PC-3 (cell line): ENCODE measurements at regions of chr20 and their contacts with region 1.

Region 1: GRCh38 chr20:9068851-9069663 is at the start of gene PLCB4:
- DNase-seq: peak; percentile 89
- ATAC-seq: peak; percentile 53
- H3K4me3 ChIP-seq: peak within 1 kb of the TSS; percentile 91
- H3K27ac ChIP-seq: peak within 1 kb of the TSS; percentile 42
- H3K4me1 ChIP-seq: peaks cover 43% of the 10 kb centered on the region
- H3K27me3 ChIP-seq: no peaks in the 10 kb centered on the region
- CTCF ChIP-seq: no peak
- total RNA-seq, gene PLCB4: 16.9 and 25.4 TPM in 2 replicates

Region 2: GRCh38 chr20:8798505-8798904 is 270.6 kb before region 1 on chr20:
- CTCF ChIA-PET with region 1: no interaction called
- POLR2A ChIA-PET with region 1: no interaction called
- intact Hi-C with region 1: no loop called
- DNase-seq: no peak
- ATAC-seq: no peak
- H3K4me3 ChIP-seq: no peak overlapping the region
- H3K27ac ChIP-seq: no peak overlapping the region
- H3K4me1 ChIP-seq: no peaks in the 10 kb centered on the region
- H3K27me3 ChIP-seq: no peaks in the 10 kb centered on the region
- CTCF ChIP-seq: no peak

Region 3: DNA sequence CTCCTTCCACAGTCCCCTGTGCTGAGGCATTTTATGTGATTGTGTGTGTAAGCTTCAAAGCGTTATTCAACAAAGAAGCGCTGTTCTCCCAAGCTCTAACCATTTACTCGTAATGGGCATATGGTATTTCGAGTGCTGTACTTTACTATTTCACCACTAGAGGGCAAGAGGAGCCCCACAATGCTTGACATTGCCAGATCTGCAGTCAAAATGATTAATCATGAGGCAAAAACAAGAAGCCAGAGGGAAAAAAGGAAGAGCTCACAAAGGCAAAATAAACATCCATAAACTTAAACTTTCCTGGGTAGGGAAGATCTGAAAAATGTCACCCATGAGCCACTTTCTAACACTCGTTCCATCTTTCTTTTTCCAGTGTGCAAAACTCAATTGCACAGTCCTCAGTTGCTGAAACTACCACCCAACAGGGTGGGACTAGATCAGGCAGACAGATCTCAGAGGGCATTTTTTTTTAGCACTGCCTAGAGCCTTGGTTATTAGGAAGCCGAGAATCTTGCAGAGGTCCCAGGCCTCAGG is 215.2 kb before region 1 on chr20:
- CTCF ChIA-PET with region 1: interaction called, 40 read pairs
- POLR2A ChIA-PET with region 1: interaction called, 4 read pairs
- intact Hi-C with region 1: loop called (anchors 1 kb)
- DNase-seq: peak; percentile 94
- ATAC-seq: peak; percentile 86
- H3K4me3 ChIP-seq: no peak overlapping the region
- H3K27ac ChIP-seq: peak overlapping the region; percentile 10; the same call in 1 of the 2 replicates
- H3K4me1 ChIP-seq: peaks cover 22% of the 10 kb centered on the region
- H3K27me3 ChIP-seq: no peaks in the 10 kb centered on the region
- CTCF ChIP-seq: peak; percentile 94

Region 4: GRCh38 chr20:8938532-8938931 is 130.5 kb before region 1 on chr20:
- CTCF ChIA-PET with region 1: no interaction called
- POLR2A ChIA-PET with region 1: no interaction called
- intact Hi-C with region 1: loop called (anchors 1 kb)
- DNase-seq: peak; percentile 65
- ATAC-seq: peak; percentile 94
- H3K4me3 ChIP-seq: no peak overlapping the region
- H3K27ac ChIP-seq: peak overlapping the region; percentile 63
- H3K4me1 ChIP-seq: peaks cover 18% of the 10 kb centered on the region
- H3K27me3 ChIP-seq: no peaks in the 10 kb centered on the region
- CTCF ChIP-seq: no peak

Region 5: GRCh38 chr20:9215539-9215938 is 146.5 kb after region 1 on chr20:
- CTCF ChIA-PET with region 1: no interaction called
- POLR2A ChIA-PET with region 1: no interaction called
- intact Hi-C with region 1: loop called (anchors 10 kb)
- DNase-seq: peak; percentile 59
- ATAC-seq: peak; percentile 13; the same call in 1 of the 2 replicates
- H3K4me3 ChIP-seq: no peak overlapping the region
- H3K27ac ChIP-seq: no peak overlapping the region
- H3K4me1 ChIP-seq: peaks cover 7% of the 10 kb centered on the region
- H3K27me3 ChIP-seq: no peaks in the 10 kb centered on the region
- CTCF ChIP-seq: peak; percentile 84

Region 6: DNA sequence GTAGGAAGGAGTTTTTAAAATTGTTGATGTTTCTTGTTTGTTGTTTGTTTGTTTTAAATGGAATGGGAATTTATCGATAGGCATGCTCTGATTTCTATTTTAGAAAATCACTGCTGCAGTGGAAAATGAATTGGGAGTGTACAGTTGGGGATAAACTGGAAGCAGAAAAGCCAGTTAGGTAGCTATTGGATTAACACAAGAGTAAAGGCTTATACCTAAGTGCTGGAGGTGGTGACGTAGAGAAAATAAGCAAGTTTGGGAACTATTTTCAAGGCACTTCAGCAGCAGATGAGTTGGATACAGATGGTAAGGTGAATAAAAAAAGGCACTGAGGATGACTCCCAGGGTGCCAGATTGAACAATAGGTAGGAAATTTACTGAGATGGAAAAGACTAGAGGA is 164.7 kb after region 1 on chr20:
- CTCF ChIA-PET with region 1: no interaction called
- POLR2A ChIA-PET with region 1: no interaction called
- intact Hi-C with region 1: no loop called
- DNase-seq: no peak
- ATAC-seq: no peak
- H3K4me3 ChIP-seq: no peak overlapping the region
- H3K27ac ChIP-seq: no peak overlapping the region
- H3K4me1 ChIP-seq: peaks cover 23% of the 10 kb centered on the region
- H3K27me3 ChIP-seq: no peaks in the 10 kb centered on the region
- CTCF ChIP-seq: no peak

Region 7: DNA sequence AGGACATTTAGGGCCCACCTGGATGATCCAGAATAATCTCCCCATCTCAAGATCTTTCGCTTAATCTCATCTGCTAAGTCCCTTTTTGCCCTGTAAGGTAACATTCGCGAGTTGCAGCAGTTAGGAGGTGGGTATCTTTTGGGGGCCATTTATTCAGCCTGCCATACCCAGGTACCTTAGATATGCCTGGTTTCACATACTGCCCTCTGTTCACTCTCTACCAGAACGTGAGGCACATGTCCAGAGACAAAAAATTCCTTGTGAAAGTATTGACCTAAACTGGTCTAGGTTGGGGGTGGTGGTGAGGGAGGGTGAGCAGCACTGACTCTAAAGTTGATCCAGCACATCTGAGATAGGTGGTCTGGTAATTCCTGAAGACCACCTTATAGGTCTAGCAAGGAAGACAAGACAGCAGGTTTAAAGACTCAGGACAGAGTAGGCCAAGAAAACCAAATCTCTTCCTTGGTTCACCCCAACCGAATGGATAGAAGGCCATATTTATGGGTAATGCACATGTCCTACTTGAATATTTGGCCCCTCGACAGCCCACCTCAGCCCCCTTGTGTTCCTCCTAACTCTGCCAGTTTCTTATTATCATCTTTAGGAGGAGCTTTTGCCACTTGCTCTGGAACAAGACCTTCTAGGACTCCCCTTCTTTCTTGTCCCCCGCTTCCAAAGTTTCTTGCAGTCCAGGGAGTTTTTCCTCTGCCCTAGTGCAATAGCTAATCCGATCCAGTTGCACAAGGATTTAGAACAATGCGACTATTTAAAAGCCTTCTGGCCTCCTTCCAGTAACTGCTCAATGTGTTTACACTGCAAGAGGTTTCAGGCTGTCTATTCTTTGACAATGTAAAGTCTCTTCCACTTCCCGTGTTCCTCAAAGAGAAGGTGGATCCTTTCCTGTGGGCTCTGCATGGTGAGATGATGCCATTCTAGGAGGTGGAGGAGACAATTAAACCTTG is 232.4 kb after region 1 on chr20:
- CTCF ChIA-PET with region 1: no interaction called
- POLR2A ChIA-PET with region 1: no interaction called
- intact Hi-C with region 1: loop called (anchors 5 kb)
- DNase-seq: peak; percentile 93
- ATAC-seq: peak; percentile 81
- H3K4me3 ChIP-seq: no peak overlapping the region
- H3K27ac ChIP-seq: peak overlapping the region; percentile 44
- H3K4me1 ChIP-seq: peaks cover 34% of the 10 kb centered on the region
- H3K27me3 ChIP-seq: no peaks in the 10 kb centered on the region
- CTCF ChIP-seq: no peak